CD8-positive, alpha-beta T cell (primary cell): ENCODE measurements at regions of chr6 and their contacts with region 1.

Region 1: DNA sequence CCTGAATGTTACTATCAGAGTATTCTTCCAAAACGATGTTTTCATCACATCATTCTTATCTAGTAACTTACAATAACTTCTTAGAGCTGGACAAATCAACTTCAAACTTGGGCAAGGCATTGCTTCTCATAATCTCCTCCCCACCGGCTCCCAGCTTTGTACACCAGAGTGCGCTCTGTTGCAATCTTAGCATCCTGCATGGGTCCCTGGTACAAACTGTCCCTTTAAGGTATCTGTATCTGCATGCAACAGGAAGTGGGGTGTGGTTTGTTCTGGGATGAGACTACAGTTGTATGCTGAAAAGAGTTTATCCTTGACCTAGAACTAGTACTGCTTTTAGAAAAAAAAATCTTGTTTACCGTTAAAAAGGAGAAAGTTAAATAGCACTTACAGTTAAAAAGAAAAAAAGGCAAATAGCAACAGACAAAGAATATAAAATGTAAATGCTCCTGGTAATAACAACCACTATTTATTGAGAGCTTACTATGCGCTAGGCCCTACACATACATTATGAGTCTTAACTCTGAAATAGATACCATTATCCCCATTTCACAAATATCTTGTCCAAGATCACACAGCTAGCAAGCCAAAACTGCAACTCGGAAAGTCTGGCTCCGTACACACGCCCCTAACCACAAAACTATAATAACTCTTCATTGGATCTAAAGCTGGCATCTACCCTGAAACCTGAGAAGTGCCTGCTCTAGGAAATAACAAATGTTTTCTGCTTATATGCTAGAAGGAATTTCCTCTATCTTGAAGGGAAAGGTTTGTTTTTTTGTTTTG is 9.8 kb upstream of the HECA start:
- DNase-seq: peak; percentile 55 to 93 (median 82)
- ATAC-seq: peak; percentile 95
- H3K4me3 ChIP-seq: peak overlapping the region; percentile 9 to 24
- H3K4me3 Mint-ChIP-seq: peak overlapping the region; percentile 59
- H3K27ac ChIP-seq: peak overlapping the region; percentile 42 to 71
- H3K27ac Mint-ChIP-seq: peak overlapping the region; percentile 93
- H3K4me1 ChIP-seq: peaks cover 30% of the 10 kb centered on the region
- H3K4me1 Mint-ChIP-seq: peaks cover 58% of the 10 kb centered on the region
- H3K27me3 ChIP-seq: no peaks in the 10 kb centered on the region
- H3K27me3 Mint-ChIP-seq: no peaks in the 10 kb centered on the region
- CTCF ChIP-seq: peak; percentile 86

Region 2: GRCh38 chr6:139080255-139080920 is 44.7 kb before region 1 on chr6:
- CTCF ChIA-PET with region 1: no interaction called
- POLR2A ChIA-PET with region 1: no interaction called
- intact Hi-C with region 1: no loop called
- DNase-seq: no peak
- ATAC-seq: no peak
- H3K4me3 ChIP-seq: no peak overlapping the region
- H3K4me3 Mint-ChIP-seq: no peak overlapping the region
- H3K27ac ChIP-seq: no peak overlapping the region
- H3K27ac Mint-ChIP-seq: no peak overlapping the region
- H3K4me1 ChIP-seq: no peaks in the 10 kb centered on the region
- H3K4me1 Mint-ChIP-seq: peaks cover 2% of the 10 kb centered on the region
- H3K27me3 ChIP-seq: no peaks in the 10 kb centered on the region
- H3K27me3 Mint-ChIP-seq: no peaks in the 10 kb centered on the region
- CTCF ChIP-seq: no peak

Region 3: DNA sequence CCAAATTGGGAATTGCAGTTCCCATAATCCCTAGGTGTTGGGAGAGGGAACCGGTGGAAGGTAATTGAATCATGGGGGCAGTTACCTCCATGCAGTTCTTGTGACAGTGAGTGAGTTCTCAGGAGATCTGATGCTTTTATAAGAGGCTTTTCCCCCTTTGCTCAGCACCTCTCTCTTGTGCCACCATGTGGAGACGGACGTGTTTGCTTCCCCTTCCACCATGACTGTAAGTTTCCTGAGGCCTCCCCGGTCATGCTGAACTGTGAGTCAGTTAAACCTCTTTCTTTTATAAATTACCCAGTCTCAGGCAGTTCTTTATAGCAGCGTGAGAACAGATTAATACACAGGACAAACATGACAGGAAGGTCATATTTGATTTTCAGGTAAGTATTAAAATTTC is 15.5 kb before region 1 on chr6:
- CTCF ChIA-PET with region 1: interaction called, 37 read pairs
- POLR2A ChIA-PET with region 1: interaction called, 38 read pairs
- intact Hi-C with region 1: loop called in 1 of 2 experiments (anchors 1 kb)
- DNase-seq: peak in 3 of 9 experiments; percentile 39 to 50 (median 42)
- ATAC-seq: no peak
- H3K4me3 ChIP-seq: no peak overlapping the region
- H3K4me3 Mint-ChIP-seq: no peak overlapping the region
- H3K27ac ChIP-seq: no peak overlapping the region
- H3K27ac Mint-ChIP-seq: peak overlapping the region; percentile 64
- H3K4me1 ChIP-seq: peaks cover 52% of the 10 kb centered on the region
- H3K4me1 Mint-ChIP-seq: peaks cover 73% of the 10 kb centered on the region
- H3K27me3 ChIP-seq: no peaks in the 10 kb centered on the region
- H3K27me3 Mint-ChIP-seq: no peaks in the 10 kb centered on the region
- CTCF ChIP-seq: peak; percentile 28

Region 4: DNA sequence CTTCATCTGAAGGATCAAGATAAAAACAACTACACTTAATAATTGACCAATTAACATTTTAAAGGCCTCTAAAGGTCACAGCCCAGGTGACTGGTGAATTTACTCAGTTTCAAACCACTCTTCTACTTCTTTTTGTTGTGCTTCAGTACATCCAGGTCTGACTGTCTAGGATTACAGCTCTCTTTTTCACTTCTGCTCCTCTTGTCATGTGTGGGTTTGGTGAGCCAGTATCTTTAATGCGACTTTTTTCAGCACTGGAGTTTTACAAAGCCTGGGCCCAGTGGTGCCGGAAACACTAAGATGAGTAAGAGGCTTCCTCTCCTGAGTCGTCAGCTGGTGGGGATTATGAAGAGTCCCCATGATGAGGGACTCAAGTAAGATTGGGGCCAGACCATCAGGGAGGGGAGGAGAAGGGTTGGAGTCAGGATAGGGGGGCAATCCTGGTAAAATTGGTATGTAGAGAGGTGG is 36.8 kb after region 1 on chr6:
- CTCF ChIA-PET with region 1: interaction called, 11 read pairs
- POLR2A ChIA-PET with region 1: interaction called, 5 read pairs
- intact Hi-C with region 1: loop called in 1 of 2 experiments (anchors 1 kb)
- DNase-seq: peak in 8 of 9 experiments; percentile 48 to 85 (median 71)
- ATAC-seq: peak; percentile 60
- H3K4me3 ChIP-seq: peak overlapping the region in 1 of 2 experiments; percentile 1
- H3K4me3 Mint-ChIP-seq: peak overlapping the region; percentile 70
- H3K27ac ChIP-seq: peak overlapping the region; percentile 52 to 68
- H3K27ac Mint-ChIP-seq: peak overlapping the region; percentile 93
- H3K4me1 ChIP-seq: peaks cover 86% of the 10 kb centered on the region
- H3K4me1 Mint-ChIP-seq: peaks cover 92% of the 10 kb centered on the region
- H3K27me3 ChIP-seq: no peaks in the 10 kb centered on the region
- H3K27me3 Mint-ChIP-seq: no peaks in the 10 kb centered on the region
- CTCF ChIP-seq: no peak

Region 5: GRCh38 chr6:139323511-139324300 is 198.6 kb after region 1 on chr6:
- CTCF ChIA-PET with region 1: interaction called, 3 read pairs
- POLR2A ChIA-PET with region 1: interaction called, 3 read pairs
- intact Hi-C with region 1: loop called in 1 of 2 experiments (anchors 1 kb)
- DNase-seq: peak; percentile 56 to 91 (median 84)
- ATAC-seq: peak; percentile 87
- H3K4me3 ChIP-seq: peak overlapping the region; percentile 54 to 59
- H3K4me3 Mint-ChIP-seq: peak overlapping the region; percentile 89
- H3K27ac ChIP-seq: peak overlapping the region; percentile 82 to 97
- H3K27ac Mint-ChIP-seq: peak overlapping the region; percentile 97
- H3K4me1 ChIP-seq: peaks cover 18% of the 10 kb centered on the region
- H3K4me1 Mint-ChIP-seq: peaks cover 35% of the 10 kb centered on the region
- H3K27me3 ChIP-seq: no peaks in the 10 kb centered on the region
- H3K27me3 Mint-ChIP-seq: no peaks in the 10 kb centered on the region
- CTCF ChIP-seq: no peak